Right cardiac atrium (tissue), 5 donors: ENCODE measurements at regions of chrX and their contacts with region 1.

Region 1: DNA sequence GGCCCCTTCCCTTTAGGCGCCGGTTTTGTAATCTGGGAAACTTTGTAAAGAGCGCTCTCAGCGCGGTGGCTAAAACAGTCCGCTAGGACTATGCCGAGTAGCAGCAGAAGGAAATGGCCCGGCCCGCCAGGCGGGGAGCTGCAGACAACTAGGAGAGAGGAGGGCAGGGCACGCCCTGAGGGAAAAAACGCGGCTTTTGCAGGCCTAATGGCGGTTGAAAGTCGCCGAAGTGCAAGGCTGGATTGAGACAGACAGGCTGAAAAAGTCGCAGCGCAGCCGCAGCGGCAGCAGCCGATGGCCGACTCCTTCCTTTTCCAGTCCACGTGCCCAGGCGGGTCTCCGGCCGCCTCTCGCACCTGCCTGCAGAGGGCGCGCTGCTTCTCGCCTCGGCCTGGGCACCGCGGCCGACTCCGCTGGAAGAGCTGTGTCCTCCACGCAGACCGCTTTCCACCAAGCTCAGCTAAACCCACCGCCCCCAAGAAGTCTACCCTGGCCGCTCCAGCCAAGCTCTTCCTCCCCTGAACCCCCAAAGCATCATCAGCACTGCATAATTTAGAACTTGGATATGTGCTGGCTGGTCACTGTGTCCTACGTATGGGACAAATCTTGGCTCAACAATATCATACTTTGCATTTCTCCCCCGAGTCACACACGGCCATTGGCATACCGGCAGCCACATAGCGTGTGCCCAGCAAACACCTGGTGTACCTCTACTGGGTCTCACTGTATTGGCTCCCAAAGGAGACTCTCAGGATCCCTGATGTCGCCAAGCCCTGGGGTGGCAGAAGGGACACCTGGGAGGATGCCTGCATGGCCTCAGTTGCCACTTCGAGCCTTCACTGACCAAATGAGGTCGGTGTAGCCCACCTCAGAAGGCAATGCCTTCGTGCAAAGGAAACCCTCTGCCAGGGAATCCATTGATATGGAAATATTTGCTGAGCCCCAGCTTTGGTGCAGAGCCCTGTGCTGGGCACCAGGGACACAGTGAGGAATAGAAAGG is 14.5 kb downstream of the SLC25A5 start:
- DNase-seq: peak; percentile 62 to 87 (median 85)
- ATAC-seq: peak; percentile 82 to 84
- H3K4me3 ChIP-seq: peak overlapping the region; percentile 35
- H3K27ac ChIP-seq: peak overlapping the region; percentile 72
- H3K4me1 ChIP-seq: no peaks in the 10 kb centered on the region
- H3K27me3 ChIP-seq: no peaks in the 10 kb centered on the region

Region 2: DNA sequence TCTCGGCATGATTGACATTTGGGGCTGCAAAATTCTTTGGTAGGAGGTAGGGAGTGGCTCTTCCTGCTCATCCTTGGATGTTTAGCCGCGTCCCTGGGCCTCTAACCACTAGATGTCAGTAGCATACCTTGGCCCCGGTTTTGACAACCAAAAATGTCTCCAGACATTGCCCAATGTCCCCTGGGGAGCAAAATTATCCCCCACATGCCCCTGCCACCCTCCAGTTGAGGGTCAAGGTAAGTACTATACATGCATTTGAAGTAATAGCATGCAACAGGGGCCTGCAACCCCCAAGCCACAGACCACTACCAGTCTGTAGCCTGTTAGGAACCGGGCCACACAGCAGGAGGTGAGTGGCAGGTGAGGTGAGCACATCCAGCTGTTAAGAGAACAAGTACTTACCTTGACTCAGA is 337.5 kb before region 1 on chrX:
- intact Hi-C with region 1: no loop called
- DNase-seq: peak in 1 of 3 donors; percentile 45
- ATAC-seq: no peak
- H3K4me3 ChIP-seq: no peak overlapping the region
- H3K27ac ChIP-seq: no peak overlapping the region
- H3K4me1 ChIP-seq: no peaks in the 10 kb centered on the region
- H3K27me3 ChIP-seq: no peaks in the 10 kb centered on the region

Region 3: DNA sequence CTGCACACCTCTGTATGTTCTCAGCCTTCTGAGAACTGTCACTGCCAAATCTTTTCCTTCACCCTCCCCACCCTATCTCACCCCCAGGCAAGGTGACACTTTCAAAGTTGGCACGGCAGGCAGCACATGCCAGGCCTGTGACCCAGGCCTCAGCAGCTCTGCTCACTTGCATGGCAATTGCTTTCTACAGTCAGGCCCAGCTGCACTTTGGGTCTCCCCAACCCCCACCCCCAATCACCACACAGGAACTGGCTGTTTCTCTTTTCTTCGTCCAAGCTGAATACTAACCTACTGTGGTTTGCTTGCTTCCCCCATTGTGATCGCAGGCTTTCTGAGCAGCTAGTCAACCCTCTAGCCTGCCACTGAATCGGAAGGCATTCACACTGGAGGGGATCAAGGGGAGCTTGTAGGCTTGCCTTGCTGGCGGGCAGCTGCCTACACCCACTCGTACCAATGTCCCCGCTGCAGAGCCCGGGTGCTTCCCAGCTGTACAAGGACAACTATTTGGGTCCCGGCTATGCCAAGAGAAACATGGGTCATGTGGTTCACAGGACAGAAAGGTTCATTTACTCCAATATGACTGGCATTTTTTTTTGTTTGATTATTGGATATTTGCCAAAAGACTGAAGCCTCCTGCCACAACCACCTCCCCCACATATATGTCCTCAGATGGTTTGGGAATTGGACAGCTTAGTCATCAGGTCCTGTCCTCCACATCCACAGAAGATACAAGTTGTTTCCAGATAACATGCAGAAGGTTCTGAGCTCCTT is 55.6 kb before region 1 on chrX:
- intact Hi-C with region 1: loop called in 1 of 4 experiments (anchors 10 kb)
- DNase-seq: peak in 1 of 3 donors; percentile 48
- ATAC-seq: peak; percentile 65 to 79
- H3K4me3 ChIP-seq: no peak overlapping the region
- H3K27ac ChIP-seq: peak overlapping the region; percentile 11
- H3K4me1 ChIP-seq: no peaks in the 10 kb centered on the region
- H3K27me3 ChIP-seq: no peaks in the 10 kb centered on the region

Region 4: GRCh38 chrX:119565107-119565663 is 82.4 kb after region 1 on chrX and contains the start of gene STEEP1:
- intact Hi-C with region 1: no loop called
- DNase-seq: peak; percentile 90 to 95 (median 94)
- ATAC-seq: peak; percentile 96 to 98
- H3K4me3 ChIP-seq: peak within 1 kb of the TSS; percentile 82
- H3K27ac ChIP-seq: peak within 1 kb of the TSS; percentile 30
- H3K4me1 ChIP-seq: no peaks in the 10 kb centered on the region
- H3K27me3 ChIP-seq: no peaks in the 10 kb centered on the region
- total RNA-seq, gene STEEP1: 13.6 to 17.4 (median 17.0) TPM

Region 5: GRCh38 chrX:119579414-119579813 is 96.6 kb after region 1 on chrX:
- intact Hi-C with region 1: no loop called
- DNase-seq: no peak
- ATAC-seq: no peak
- H3K4me3 ChIP-seq: no peak overlapping the region
- H3K27ac ChIP-seq: no peak overlapping the region
- H3K4me1 ChIP-seq: no peaks in the 10 kb centered on the region
- H3K27me3 ChIP-seq: no peaks in the 10 kb centered on the region